AG04450 (cell line): ENCODE measurements at regions of chr16 and their contacts with region 1.

Region 1: DNA sequence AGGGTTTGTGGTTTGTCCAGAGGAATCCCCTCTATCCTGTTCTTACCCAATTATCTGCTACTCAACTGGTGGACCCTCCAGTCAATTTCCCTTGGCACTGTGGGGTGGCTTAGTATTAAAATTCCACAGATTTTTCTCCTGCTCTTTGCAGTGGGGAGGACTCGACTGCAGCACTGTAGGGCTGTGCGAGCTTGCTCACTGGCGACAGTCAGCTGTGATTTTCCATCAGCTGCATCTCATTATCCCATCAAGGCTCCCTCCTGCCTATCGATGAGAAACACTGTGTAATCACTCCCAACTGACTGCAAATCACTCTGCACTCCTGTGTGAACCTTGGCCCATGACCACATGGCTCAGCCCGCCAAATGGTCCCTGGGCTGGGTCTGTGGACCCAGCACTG is 90.5 kb upstream of the MAF start:
- DNase-seq: no peak
- H3K4me3 ChIP-seq: no peak overlapping the region
- H3K27ac ChIP-seq: no peak overlapping the region
- H3K27me3 ChIP-seq: no peaks in the 10 kb centered on the region
- CTCF ChIP-seq: no peak

Region 2: GRCh38 chr16:79769270-79769927 is 78.4 kb after region 1 on chr16:
- CTCF ChIA-PET with region 1: no interaction called
- POLR2A ChIA-PET with region 1: interaction called, 13 read pairs
- DNase-seq: no peak
- H3K4me3 ChIP-seq: no peak overlapping the region
- H3K27ac ChIP-seq: no peak overlapping the region
- H3K27me3 ChIP-seq: no peaks in the 10 kb centered on the region
- CTCF ChIP-seq: no peak